Psoas muscle (tissue), 8 donors: ENCODE measurements at regions of chr10 and their contacts with region 1.

Region 1: DNA sequence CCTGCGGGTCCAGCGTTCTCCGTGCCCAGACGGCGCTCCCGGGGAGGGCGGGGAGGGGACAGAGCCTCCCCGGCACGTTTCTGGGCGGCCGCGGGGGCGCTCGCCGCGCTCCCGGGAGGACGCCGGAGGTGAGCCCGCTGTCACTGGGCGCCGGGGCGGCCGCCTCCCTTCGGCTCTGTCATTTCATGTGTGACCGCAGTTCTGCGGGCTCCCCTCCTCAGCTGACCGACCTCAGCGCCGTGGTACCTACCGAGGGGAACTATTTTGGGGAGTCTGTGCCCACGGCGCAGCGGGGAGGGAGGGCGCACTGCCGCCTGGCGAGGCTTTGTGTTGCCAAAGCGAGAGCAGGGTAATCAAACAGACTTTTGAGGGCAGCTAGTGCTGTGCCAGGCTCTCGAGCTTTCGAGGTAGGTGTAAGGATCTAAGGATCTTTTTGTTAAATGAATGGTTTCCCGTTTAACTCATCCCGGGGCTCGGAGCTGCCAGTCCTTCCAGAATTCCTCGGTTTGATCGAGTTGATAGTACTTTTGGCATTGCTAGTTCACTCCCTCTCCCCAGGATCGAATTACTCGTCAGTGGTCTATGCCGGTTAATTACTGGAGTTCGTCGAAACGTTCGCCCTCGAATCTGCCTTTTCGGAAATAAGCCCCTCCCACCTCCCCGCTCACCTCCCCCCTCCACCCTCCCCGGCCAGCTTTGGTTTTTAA is 1.9 kb downstream of the ARID5B start:
- DNase-seq: peak; percentile 61 to 76
- ATAC-seq: peak; percentile 71 to 83 (median 80)
- H3K4me3 ChIP-seq: peak overlapping the region; percentile 98
- H3K27ac ChIP-seq: peak overlapping the region; percentile 98
- H3K4me1 ChIP-seq: peaks cover 22% of the 10 kb centered on the region
- H3K27me3 ChIP-seq: no peaks in the 10 kb centered on the region
- CTCF ChIP-seq: peak; percentile 30

Region 2: GRCh38 chr10:61950449-61951143 is 47.2 kb after region 1 on chr10:
- intact Hi-C with region 1: no loop called
- DNase-seq: no peak
- ATAC-seq: no peak
- H3K4me3 ChIP-seq: no peak overlapping the region
- H3K27ac ChIP-seq: no peak overlapping the region
- H3K4me1 ChIP-seq: no peaks in the 10 kb centered on the region
- H3K27me3 ChIP-seq: no peaks in the 10 kb centered on the region
- CTCF ChIP-seq: no peak

Region 3: DNA sequence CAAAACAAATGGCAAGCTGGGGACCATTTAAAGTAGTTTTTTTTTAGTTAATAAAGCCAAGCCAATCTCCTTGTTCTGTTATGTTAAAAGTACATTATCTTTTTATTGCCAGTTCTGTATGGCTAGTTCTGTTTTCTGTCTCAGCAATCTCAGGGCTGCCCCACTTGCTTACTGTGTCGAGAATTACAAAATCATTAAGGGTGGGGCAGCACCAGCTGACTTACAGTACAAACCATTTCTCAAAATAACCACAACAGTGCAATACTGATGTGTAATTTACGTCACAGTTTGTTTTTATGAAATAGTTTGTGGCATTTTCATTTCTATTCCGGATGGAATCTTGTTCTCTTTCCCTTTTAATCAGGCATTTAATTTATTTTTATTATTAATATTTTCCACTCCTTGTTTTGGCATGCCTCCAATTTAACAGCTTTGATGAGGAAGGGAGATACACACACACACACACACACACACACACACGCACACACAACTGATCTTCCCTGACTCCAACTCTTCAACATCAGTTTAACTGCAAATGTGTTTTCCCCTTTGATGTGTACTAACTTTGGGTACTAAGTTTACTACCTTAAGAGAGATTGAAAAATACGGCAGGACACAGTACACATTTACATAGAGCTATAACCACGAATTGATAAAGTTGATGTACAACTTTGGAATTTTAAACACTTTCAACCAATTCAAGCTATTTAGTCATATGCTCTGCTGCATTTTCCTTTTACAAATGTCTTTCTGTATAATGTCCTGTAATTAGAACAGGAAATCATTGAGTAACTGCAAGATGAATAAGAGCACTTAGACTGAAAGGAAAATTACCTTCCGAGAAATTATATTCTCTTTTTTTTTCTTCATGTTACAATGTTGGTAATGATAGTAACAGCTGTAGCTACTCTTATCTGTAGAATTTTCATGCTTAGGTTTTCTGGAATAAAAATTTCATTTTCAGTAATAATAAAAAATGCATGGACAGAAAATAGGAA is 89.6 kb after region 1 on chr10:
- intact Hi-C with region 1: loop called (anchors 5 to 10 kb)
- DNase-seq: no peak
- ATAC-seq: peak; percentile 84 to 97 (median 94)
- H3K4me3 ChIP-seq: peak overlapping the region; percentile 46
- H3K27ac ChIP-seq: peak overlapping the region; percentile 69
- H3K4me1 ChIP-seq: peaks cover 26% of the 10 kb centered on the region
- H3K27me3 ChIP-seq: no peaks in the 10 kb centered on the region
- CTCF ChIP-seq: no peak

Region 4: DNA sequence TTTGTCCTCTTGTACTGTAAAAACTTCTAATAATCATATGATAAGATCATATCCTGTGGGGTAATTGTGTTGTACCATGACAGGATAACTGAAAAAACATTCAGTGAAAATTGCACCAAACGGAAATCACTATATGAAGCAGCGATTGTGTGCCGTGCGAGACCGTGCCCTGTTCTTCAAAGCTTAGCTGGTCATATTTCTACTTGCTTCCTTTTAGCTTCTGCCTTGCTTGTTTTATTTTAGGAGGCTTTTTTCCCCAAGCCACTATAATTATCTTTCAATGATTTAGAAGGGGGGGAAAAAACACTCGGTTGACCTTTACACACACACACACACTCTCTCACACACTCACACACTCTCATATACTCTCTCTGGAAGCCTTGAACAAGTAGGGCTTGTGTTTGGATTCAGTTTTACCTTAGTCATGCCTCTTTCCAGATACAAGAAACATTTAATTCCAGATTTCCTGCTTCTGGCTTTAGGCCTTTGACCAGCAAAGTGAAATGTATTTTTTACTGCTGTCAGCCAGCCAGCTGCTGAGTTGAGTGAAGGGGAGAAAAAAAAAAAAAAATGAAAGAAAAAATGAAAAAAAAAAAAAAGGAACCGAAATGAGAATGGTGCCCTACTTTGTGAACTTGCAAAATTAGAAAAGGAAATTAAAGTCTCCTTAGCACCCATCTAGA is 179.5 kb after region 1 on chr10:
- intact Hi-C with region 1: loop called in 1 of 2 experiments (anchors 5 kb)
- DNase-seq: no peak
- ATAC-seq: peak in 2 of 4 donors; percentile 19 to 41
- H3K4me3 ChIP-seq: peak overlapping the region; percentile 40
- H3K27ac ChIP-seq: peak overlapping the region; percentile 82
- H3K4me1 ChIP-seq: peaks cover 69% of the 10 kb centered on the region
- H3K27me3 ChIP-seq: no peaks in the 10 kb centered on the region
- CTCF ChIP-seq: no peak